ENCODE measurements at regions of chr5 and their contacts with region 1.

Region 1: GRCh38 chr5:157611571-157612476 is 36.2 kb upstream of the ADAM19 start:
- DNase-seq: peak; percentile 32
- ATAC-seq: peak; percentile 21
- H3K4me3 Mint-ChIP-seq: no peak overlapping the region
- H3K27ac Mint-ChIP-seq: peak overlapping the region; percentile 85
- H3K4me1 Mint-ChIP-seq: peaks cover 64% of the 10 kb centered on the region
- H3K27me3 Mint-ChIP-seq: no peaks in the 10 kb centered on the region

Region 2: GRCh38 chr5:157651623-157652549 is 40.1 kb after region 1 on chr5 and contains the start of gene SOX30:
- CTCF ChIA-PET with region 1: interaction called, 3 read pairs
- POLR2A ChIA-PET with region 1: no interaction called
- intact Hi-C with region 1: loop called in 1 of 2 experiments (anchors 5 kb)
- DNase-seq: peak; percentile 92
- ATAC-seq: peak; percentile 99
- H3K4me3 Mint-ChIP-seq: peak within 1 kb of the TSS; percentile 69
- H3K27ac Mint-ChIP-seq: peak within 1 kb of the TSS; percentile 83
- H3K4me1 Mint-ChIP-seq: peaks cover 15% of the 10 kb centered on the region
- H3K27me3 Mint-ChIP-seq: no peaks in the 10 kb centered on the region
- total RNA-seq, gene SOX30: 0.18 to 0.44 TPM

Region 3: GRCh38 chr5:158054223-158055110 is 442.6 kb after region 1 on chr5:
- CTCF ChIA-PET with region 1: no interaction called
- POLR2A ChIA-PET with region 1: no interaction called
- intact Hi-C with region 1: no loop called
- DNase-seq: no peak
- ATAC-seq: no peak
- H3K4me3 Mint-ChIP-seq: no peak overlapping the region
- H3K27ac Mint-ChIP-seq: no peak overlapping the region
- H3K4me1 Mint-ChIP-seq: no peaks in the 10 kb centered on the region
- H3K27me3 Mint-ChIP-seq: peaks cover 12% of the 10 kb centered on the region